ENCODE measurements at regions of chr11 and their contacts with region 1.

Region 1: DNA sequence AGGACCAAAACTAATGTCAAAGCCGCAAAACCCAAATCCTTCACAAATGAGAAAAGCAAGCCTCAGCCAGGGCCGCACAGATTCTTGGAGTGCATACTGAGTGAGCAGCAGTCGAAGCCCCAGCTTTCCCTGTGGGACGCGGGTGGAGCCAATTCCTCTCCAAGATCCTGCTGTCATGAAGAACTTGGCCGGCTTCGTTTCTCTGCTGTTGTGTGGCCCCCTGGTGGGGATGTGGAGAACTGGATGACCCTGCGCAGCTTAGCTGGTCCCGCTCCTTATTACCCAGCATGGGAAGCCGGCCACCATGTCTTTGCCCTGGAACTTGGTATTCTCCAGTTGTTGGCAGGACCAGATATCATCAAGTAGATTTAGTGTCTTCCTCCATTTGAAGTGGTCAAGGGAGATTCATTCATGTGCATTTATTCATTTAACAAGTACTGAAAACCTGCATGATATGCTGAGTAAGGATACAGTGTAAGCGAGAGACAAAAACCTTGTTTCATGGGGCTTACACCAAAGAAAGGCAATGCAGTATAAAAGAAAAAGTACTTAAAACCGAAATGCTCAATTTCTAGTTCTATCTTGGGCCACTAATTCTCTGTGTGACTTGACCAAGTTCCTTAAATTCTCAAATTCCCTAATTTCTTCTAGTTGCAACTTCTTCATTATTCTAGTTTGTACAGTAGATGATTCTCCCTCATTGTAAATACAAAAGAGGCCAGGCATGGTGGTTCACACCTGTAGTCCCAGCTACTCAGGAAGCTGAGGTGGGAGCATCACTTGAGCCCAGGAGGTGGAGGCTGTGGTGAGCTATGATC is 56.7 kb upstream of the CRTAM start:
- DNase-seq: peak; percentile 49
- H3K4me3 ChIP-seq: no peak overlapping the region
- H3K27me3 ChIP-seq: no peaks in the 10 kb centered on the region
- CTCF ChIP-seq: peak; percentile 95

Region 2: GRCh38 chr11:122628810-122629555 is 152.6 kb before region 1 on chr11:
- CTCF ChIA-PET with region 1: interaction called, 124 read pairs
- POLR2A ChIA-PET with region 1: no interaction called
- DNase-seq: no peak
- H3K4me3 ChIP-seq: no peak overlapping the region
- H3K27me3 ChIP-seq: peaks cover 5% of the 10 kb centered on the region
- CTCF ChIP-seq: peak; percentile 93

Region 3: DNA sequence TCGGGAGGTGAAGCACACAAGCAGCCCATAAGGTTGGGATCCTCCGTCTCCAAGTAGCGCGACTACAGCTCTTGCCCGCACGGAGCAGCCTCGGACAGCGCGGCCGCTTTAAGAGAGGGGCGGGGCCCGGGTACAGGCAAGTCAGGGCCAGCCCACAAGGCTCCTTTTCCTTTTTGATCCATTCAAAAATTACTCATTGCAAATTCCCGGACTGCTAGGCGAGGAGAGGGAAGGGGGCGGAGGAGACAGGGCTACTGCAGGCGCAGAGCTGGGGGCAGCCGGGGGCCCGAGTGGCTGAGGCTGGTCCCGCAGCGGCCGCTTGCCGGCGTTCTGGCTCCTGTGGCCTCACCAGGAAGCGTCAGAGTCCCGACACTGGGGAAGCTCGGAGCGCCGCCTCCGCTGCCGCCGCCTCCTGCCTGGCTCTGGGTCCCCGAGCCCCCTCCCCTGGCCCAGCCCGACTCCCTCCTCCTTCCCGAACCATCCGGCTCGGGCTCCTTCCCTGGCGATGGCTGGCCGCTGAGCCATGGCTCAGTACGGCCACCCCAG is 126.0 kb before region 1 on chr11 and contains the start of gene UBASH3B:
- CTCF ChIA-PET with region 1: interaction called, 16 read pairs
- POLR2A ChIA-PET with region 1: no interaction called
- DNase-seq: no peak
- H3K4me3 ChIP-seq: peak within 1 kb of the TSS; percentile 90
- H3K27me3 ChIP-seq: no peaks in the 10 kb centered on the region
- CTCF ChIP-seq: peak; percentile 21; the same call in 1 of the 2 replicates
- polyA plus RNA-seq, gene UBASH3B: 22.2 and 28.4 TPM in 2 replicates

Region 4: DNA sequence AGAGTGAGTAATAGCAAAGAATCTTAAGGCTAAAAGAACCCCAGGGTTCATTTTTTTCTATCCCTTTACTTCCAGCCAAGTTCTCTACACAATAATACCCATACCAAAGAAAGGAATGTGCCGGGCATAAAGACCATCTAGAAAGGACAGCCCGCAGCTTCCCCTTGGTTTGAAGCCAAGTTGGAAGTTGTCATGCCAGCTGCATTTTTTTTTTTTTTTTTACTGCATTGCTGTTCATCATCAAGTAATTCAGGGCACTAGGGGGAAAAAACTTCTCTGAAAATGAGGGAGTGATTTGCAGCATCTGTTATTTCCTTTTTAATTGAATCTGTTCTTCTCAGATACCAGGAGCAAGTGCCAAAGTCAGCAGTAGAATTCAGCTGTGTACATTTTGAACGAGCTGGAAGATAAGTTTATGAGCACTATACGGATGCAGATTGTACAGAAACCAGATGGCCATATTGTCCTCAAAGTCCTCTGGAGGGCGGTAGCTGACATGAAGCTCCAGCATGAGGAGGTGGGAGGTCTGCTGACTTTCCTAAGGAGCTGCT is 69.7 kb before region 1 on chr11:
- CTCF ChIA-PET with region 1: interaction called, 10 read pairs
- POLR2A ChIA-PET with region 1: no interaction called
- DNase-seq: no peak
- H3K4me3 ChIP-seq: no peak overlapping the region
- H3K27me3 ChIP-seq: no peaks in the 10 kb centered on the region
- CTCF ChIP-seq: peak; percentile 27; the same call in 1 of the 2 replicates

Region 5: GRCh38 chr11:122727101-122727929 is 54.3 kb before region 1 on chr11:
- CTCF ChIA-PET with region 1: interaction called, 10 read pairs
- POLR2A ChIA-PET with region 1: no interaction called
- DNase-seq: no peak
- H3K4me3 ChIP-seq: no peak overlapping the region
- H3K27me3 ChIP-seq: no peaks in the 10 kb centered on the region
- CTCF ChIP-seq: no peak

Region 6: GRCh38 chr11:122754553-122755322 is 26.8 kb before region 1 on chr11:
- CTCF ChIA-PET with region 1: interaction called, 13 read pairs
- POLR2A ChIA-PET with region 1: no interaction called
- DNase-seq: no peak
- H3K4me3 ChIP-seq: no peak overlapping the region
- H3K27me3 ChIP-seq: no peaks in the 10 kb centered on the region
- CTCF ChIP-seq: peak; percentile 45

Region 7: DNA sequence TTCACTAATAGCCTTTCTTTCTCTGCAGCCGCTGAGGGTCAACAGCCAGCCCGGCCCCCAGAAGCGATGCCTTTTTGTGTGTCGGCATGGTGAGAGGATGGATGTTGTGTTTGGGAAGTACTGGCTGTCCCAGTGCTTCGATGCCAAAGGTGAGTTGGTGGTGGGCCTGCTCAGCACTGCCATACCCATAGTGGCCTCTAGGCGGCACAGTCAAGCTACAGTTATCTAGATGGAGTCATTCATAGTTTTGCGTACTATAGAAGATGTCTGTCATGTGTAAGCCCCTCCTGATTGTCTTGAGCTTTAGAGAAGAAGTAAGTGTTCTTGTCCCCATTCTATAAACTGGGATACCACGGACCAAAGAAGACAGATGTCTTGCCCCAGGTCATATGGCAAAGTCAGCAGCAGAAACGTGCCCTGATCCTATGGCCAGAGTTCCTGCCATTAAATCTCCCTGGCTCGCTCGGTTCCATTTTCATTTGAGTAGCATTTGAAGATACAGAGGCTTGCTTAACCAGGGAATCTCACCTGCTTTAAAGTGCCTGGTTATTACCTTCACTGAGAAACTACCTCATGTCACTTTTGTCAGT is 14.6 kb after region 1 on chr11:
- CTCF ChIA-PET with region 1: interaction called, 41 read pairs
- POLR2A ChIA-PET with region 1: no interaction called
- DNase-seq: no peak
- H3K4me3 ChIP-seq: no peak overlapping the region
- H3K27me3 ChIP-seq: no peaks in the 10 kb centered on the region
- CTCF ChIP-seq: peak; percentile 86

Region 8: DNA sequence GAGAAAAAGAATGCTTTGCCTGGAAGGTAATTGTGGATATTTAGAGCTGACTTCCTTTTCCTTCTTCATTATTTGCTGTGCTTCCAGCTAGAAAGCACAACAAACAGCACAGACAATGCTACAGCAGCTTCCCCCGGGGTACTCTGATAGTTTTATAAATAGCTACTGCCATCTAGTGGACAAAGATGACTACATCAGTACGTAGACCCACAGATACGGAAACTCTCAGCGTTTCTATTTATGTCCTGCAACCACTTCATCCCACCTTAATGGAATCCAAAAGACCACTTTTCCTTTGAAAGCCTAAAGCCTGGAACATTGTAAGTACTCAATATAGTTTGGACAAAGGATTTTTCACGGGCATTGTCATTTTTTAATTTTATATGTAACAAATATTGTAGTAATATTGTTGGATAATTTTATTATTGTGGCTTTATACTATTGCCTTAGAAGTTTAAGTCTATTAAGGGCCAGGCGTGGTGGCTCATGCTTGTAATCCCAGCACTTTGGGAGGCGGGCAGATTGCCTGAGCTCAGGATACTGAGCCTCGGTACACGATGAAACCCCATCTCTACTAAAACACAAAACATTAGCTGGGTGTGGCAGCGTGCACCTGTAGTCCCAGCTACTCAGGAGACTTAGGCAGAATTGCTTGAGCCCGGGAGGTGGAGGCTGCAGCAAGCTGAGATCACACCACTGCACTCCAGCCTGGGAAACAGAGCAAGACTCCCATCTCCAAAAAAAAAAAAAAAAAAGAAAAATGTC is 272.9 kb after region 1 on chr11:
- CTCF ChIA-PET with region 1: no interaction called
- POLR2A ChIA-PET with region 1: no interaction called
- DNase-seq: no peak
- H3K4me3 ChIP-seq: no peak overlapping the region
- H3K27me3 ChIP-seq: no peaks in the 10 kb centered on the region
- CTCF ChIP-seq: peak; percentile 63

Region 9: GRCh38 chr11:123206791-123207434 is 425.3 kb after region 1 on chr11:
- CTCF ChIA-PET with region 1: no interaction called
- POLR2A ChIA-PET with region 1: no interaction called
- DNase-seq: no peak
- H3K4me3 ChIP-seq: no peak overlapping the region
- H3K27me3 ChIP-seq: no peaks in the 10 kb centered on the region
- CTCF ChIP-seq: no peak

Measured in BJ (cell line).